A549 (cell line): ENCODE measurements at regions of chr2 and their contacts with region 1.

Region 1: DNA sequence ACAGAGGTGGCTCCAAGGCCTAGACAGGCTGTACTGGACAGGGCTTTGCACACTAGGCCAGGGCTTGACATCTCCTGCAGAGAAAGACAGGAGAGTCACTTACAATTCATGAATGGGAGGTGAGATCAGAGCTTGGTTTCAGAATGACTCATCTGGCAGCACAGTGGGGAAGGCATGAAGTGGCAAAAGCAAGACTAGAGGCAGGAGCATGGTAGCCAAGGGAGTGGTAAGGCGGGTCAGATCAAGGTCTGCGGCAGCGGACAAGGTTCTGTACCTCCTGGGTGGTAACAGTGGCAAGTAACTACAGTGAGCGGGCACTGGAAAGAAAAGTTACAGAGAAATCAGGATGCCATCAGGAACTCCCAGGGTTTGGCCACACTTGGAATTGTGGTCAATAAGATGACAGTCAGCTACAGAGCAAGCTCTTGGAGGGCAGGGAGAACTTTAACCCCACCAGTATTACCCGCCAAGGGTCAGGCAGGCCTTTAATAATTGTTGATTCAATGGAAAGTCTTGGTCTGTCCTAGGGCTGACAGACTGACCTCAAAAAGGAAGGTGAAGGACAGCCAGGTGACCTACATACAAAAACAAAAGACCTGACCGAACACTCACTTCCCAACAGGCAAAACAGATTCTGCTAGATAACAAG is 5.7 kb downstream of the MCFD2 start:
- DNase-seq: peak; percentile 75 to 85
- ATAC-seq: peak; percentile 90 to 91
- H3K4me3 ChIP-seq: no peak overlapping the region
- H3K27ac ChIP-seq: peak overlapping the region; percentile 69 to 86
- H3K4me1 ChIP-seq: peaks cover 51% of the 10 kb centered on the region
- CTCF ChIP-seq: no peak
- EP300 ChIP-seq: peak in 1 of 2 experiments; percentile 60; a peak in 2 of 5 replicates
- POLR2A ChIP-seq: no peak
- RAD21 ChIP-seq: 0 out of 5 replicates have a peak, but pooled peaks of 1 of the 2 experiments have one; percentile 9

Region 2: GRCh38 chr2:46866770-46867246 is 43.1 kb before region 1 on chr2:
- CTCF ChIA-PET with region 1: no interaction called
- POLR2A ChIA-PET with region 1: no interaction called
- DNase-seq: no peak
- ATAC-seq: no peak
- H3K4me3 ChIP-seq: no peak overlapping the region
- H3K27ac ChIP-seq: peak overlapping the region; percentile 91 to 97
- H3K4me1 ChIP-seq: peaks cover 20% of the 10 kb centered on the region
- CTCF ChIP-seq: no peak
- EP300 ChIP-seq: no peak
- POLR2A ChIP-seq: no peak
- RAD21 ChIP-seq: no peak

Region 3: GRCh38 chr2:46893269-46893945 is 16.5 kb before region 1 on chr2:
- CTCF ChIA-PET with region 1: interaction called, 24 read pairs
- POLR2A ChIA-PET with region 1: no interaction called
- DNase-seq: peak in 1 of 2 experiments; percentile 30
- ATAC-seq: no peak
- H3K4me3 ChIP-seq: no peak overlapping the region
- H3K27ac ChIP-seq: peak overlapping the region in 1 of 2 experiments; percentile 36; a peak in 2 of 6 replicates
- H3K4me1 ChIP-seq: peaks cover 22% of the 10 kb centered on the region
- CTCF ChIP-seq: no peak
- EP300 ChIP-seq: no peak
- POLR2A ChIP-seq: no peak
- RAD21 ChIP-seq: no peak

Region 4: DNA sequence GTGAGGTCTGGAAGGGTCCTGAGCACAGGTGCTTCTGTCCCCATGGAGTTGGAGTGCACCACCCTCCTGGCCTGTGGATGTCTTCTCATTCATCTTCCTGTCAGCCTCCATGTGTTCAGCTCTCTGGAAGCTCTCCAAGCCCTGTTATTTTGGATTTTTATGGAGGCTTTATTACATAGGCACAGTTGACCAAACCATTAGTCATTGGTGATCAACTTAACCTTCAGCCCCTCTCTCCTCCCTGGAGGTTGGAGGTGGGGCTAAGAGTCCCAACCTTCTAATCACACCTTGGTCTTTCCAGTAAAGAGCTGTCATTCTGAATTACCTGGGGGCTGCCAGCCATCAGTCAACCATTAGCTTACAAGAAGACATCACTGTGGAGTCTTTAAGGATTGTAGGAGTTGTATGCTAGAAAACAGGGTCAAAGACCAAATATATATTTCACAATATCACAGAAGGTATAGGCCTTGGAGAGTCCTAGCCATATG is 13.2 kb after region 1 on chr2:
- CTCF ChIA-PET with region 1: interaction called, 21 read pairs
- POLR2A ChIA-PET with region 1: no interaction called
- DNase-seq: peak in 1 of 2 experiments; percentile 53
- ATAC-seq: peak in 1 of 2 experiments; percentile 65; a peak in 3 of 6 replicates
- H3K4me3 ChIP-seq: no peak overlapping the region
- H3K27ac ChIP-seq: no peak overlapping the region
- H3K4me1 ChIP-seq: peaks cover 18% of the 10 kb centered on the region
- CTCF ChIP-seq: no peak
- EP300 ChIP-seq: no peak
- POLR2A ChIP-seq: no peak
- RAD21 ChIP-seq: no peak